ENCODE measurements at regions of chr5 and their contacts with region 1.

Region 1: DNA sequence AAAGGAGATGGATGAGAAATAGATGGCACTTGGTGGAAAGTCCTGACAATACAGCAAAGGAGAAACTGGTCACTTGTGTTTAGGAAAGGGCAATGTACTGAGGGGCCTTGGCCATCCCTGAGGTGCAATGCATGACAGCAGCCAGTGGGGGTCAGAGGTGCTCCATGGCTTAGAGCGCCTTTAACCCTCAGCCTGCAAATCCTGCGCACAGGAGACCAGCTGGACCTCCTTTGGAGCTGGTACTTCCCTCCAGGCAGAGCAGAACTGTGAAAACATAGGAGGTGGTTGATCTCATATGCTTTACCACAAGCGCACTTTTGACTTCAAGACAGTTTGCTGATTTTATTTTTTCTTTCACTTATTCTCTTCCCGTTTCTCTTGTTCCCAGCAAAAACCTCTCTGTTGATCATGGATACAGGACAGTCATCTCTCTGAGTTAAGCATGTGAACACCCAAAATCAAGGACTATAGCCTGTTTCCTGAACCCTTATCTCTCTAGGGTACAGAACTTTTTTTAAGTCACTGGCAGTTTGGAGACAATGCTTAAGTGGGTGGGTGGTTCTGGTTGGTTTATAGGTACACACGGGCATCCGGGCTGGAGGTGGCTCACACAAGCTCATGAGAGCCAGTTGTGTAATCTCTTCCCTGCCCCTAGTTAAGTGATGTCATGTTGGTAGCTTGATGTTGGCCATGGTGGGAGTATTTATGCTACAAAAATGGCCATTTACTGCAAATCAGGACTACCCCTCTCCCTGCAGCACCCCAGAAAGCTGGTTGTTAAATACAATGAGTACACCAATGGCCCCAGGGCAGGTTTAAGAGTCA is 37.6 kb upstream of the ANKRD55 start:
- DNase-seq: peak; percentile 27 to 88
- H3K4me3 ChIP-seq: no peak overlapping the region
- H3K27ac ChIP-seq: no peak overlapping the region
- H3K4me1 ChIP-seq: no peaks in the 10 kb centered on the region
- H3K27me3 ChIP-seq: no peaks in the 10 kb centered on the region
- CTCF ChIP-seq: peak; percentile 95 to 99 (median 97)

Region 2: GRCh38 chr5:55936100-55936693 is 334.6 kb before region 1 on chr5:
- intact Hi-C with region 1: loop called (anchors 5 kb)
- DNase-seq: peak in 1 of 2 donors; percentile 81
- H3K4me3 ChIP-seq: no peak overlapping the region
- H3K27ac ChIP-seq: no peak overlapping the region
- H3K4me1 ChIP-seq: peaks cover 0 to 4% of the 10 kb centered on the region in 2 donors
- H3K27me3 ChIP-seq: no peaks in the 10 kb centered on the region
- CTCF ChIP-seq: peak; percentile 67 to 75 (median 68)

Region 3: GRCh38 chr5:56012281-56012963 is 258.4 kb before region 1 on chr5:
- intact Hi-C with region 1: no loop called
- DNase-seq: no peak
- H3K4me3 ChIP-seq: no peak overlapping the region
- H3K27ac ChIP-seq: no peak overlapping the region
- H3K4me1 ChIP-seq: no peaks in the 10 kb centered on the region
- H3K27me3 ChIP-seq: no peaks in the 10 kb centered on the region
- CTCF ChIP-seq: no peak

Region 4: GRCh38 chr5:56070851-56071465 is 199.8 kb before region 1 on chr5:
- intact Hi-C with region 1: no loop called
- DNase-seq: no peak
- H3K4me3 ChIP-seq: peak overlapping the region in 1 of 2 donors; percentile 4
- H3K27ac ChIP-seq: peak overlapping the region; percentile 36 to 66
- H3K4me1 ChIP-seq: peaks cover 4 to 23% of the 10 kb centered on the region in 2 donors
- H3K27me3 ChIP-seq: no peaks in the 10 kb centered on the region
- CTCF ChIP-seq: no peak

Region 5: GRCh38 chr5:56481428-56482357 is 210.9 kb after region 1 on chr5:
- intact Hi-C with region 1: loop called (anchors 5 kb)
- DNase-seq: no peak
- H3K4me3 ChIP-seq: peak overlapping the region; percentile 77 to 89
- H3K27ac ChIP-seq: peak overlapping the region; percentile 90 to 97
- H3K4me1 ChIP-seq: peaks cover 5 to 21% of the 10 kb centered on the region in 2 donors
- H3K27me3 ChIP-seq: no peaks in the 10 kb centered on the region
- CTCF ChIP-seq: peak in 2 of 3 experiments; percentile 13 to 23

Region 6: DNA sequence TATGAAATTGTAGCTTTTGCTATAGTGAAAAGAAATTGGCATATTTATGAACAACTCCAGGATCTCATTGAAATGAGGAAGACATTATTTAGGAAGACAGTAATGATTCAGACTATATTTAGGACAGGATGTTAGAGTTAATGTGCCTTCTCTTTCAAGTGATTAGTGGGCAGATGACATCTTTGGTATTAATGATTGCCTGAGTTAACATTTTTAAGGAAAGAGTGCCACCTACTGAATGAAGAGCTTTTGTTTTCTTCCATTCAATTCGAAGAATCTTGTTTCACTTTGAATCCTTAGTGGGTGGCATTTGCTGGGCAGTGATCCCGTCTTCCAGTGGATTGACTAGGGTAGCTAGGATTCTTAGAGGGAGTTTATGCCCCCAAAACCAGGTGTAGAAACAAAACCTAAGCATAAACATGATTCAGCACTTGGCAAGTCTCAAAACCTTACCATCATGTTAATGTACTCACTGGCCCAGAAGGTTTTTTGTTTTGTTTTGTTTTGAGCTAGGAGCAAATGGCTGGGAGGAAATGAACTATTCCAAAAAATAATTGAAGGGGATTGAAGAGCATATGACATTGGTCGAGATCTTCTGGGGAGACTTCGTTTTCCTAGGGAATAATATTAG is 567.7 kb after region 1 on chr5:
- intact Hi-C with region 1: loop called (anchors 1 kb)
- DNase-seq: no peak
- H3K4me3 ChIP-seq: peak overlapping the region; percentile 12 to 38
- H3K27ac ChIP-seq: peak overlapping the region; percentile 28 to 34
- H3K4me1 ChIP-seq: no peaks in the 10 kb centered on the region
- H3K27me3 ChIP-seq: no peaks in the 10 kb centered on the region
- CTCF ChIP-seq: peak; percentile 57 to 62 (median 60)

Measured in ascending aorta (tissue), 2 donors.